ENCODE measurements at regions of chr14 and their contacts with region 1.

Region 1: DNA sequence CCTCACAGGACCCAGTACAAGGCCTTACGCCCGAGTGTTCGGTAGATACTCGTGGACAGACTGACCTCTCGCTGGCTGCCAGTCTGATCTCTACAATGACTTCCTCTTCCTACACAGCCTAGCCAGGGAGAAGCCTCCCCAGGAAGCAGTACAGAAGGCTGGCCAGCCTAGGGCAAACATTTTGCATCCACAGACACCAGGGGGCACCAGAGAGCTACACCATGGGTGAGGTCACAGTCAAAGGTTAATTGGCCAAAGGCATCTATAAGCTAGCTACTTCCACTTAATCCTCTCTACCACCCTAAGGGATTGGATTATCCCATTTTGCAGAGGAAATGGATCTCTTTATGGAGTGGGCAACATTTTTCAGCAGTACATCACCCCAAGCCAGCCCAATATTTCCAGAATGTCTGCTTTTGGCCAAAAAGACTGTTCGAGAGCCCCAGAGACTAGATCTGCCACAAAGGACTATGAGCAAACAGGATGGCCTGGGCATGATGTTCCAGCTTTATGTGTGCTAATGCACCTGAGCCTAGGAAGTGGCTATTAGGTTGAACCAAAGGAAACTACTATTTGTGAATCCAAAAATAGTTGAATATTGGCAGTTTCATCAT is 14.6 kb upstream of the PNMA1 start:
- DNase-seq: no peak
- ATAC-seq: peak; percentile 95
- H3K4me3 ChIP-seq: no peak overlapping the region
- H3K27ac ChIP-seq: no peak overlapping the region
- H3K4me1 ChIP-seq: no peaks in the 10 kb centered on the region
- H3K27me3 ChIP-seq: no peaks in the 10 kb centered on the region
- CTCF ChIP-seq: peak; percentile 90 to 95 (median 91)
- EP300 ChIP-seq: no peak
- POLR2A ChIP-seq: 0 out of 2 replicates have a peak, but pooled peaks have one; percentile 5
- RAD21 ChIP-seq: peak; percentile 95

Region 2: DNA sequence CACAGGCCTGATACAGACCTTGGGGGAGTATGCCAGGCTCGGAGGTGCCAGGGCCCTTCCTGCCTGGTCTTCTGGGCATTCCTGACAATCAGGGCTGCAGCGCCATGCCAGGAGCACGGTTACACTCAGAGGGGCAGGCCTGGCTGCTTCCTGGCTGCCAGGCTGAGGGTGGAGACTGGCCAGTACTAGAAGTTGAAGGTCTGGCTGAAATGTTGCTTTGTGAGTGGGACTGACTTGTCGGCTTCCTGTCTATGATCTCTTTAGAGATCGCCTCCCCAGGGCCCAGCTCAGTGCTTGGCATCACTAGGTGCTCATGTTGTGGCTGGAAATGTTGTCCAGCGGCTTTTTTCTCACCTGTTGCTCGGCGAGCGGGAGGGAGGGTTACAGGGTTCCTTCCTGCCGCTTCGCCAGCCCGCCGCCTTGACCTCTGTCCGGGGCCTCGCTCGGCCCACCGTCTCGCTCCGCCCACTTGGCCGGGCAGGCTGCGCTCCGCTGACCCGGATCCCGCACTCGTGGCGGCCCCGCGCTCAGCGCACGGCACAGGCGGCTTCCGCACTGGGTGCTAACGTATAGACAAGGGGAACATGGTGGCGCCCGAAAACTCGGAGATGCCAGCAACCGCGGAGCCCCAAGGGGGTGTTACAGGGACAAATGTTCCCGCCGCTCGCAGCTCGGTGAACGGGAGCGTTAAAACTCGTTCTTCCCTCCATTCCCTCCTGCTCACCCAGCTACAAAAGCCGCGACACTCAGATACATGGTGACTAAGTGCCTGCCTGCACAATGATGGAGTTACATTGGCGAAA is 458.9 kb before region 1 on chr14:
- CTCF ChIA-PET with region 1: no interaction called
- POLR2A ChIA-PET with region 1: no interaction called
- RAD21 ChIA-PET with region 1: no interaction called
- SMC1A ChIA-PET with region 1: no interaction called
- in situ Hi-C with region 1: no loop called
- intact Hi-C with region 1: no loop called
- DNase-seq: no peak
- ATAC-seq: peak; percentile 97
- H3K4me3 ChIP-seq: peak overlapping the region; percentile 46; the same call in 1 of the 2 replicates
- H3K27ac ChIP-seq: peak overlapping the region; percentile 3; the same call in 1 of the 2 replicates
- H3K4me1 ChIP-seq: peaks cover 14% of the 10 kb centered on the region
- H3K27me3 ChIP-seq: no peaks in the 10 kb centered on the region
- CTCF ChIP-seq: no peak
- EP300 ChIP-seq: 0 out of 4 replicates have a peak, but pooled peaks of 1 of the 2 experiments have one; percentile 21
- POLR2A ChIP-seq: no peak; the same call in 1 of the 2 replicates
- RAD21 ChIP-seq: no peak

Region 3: DNA sequence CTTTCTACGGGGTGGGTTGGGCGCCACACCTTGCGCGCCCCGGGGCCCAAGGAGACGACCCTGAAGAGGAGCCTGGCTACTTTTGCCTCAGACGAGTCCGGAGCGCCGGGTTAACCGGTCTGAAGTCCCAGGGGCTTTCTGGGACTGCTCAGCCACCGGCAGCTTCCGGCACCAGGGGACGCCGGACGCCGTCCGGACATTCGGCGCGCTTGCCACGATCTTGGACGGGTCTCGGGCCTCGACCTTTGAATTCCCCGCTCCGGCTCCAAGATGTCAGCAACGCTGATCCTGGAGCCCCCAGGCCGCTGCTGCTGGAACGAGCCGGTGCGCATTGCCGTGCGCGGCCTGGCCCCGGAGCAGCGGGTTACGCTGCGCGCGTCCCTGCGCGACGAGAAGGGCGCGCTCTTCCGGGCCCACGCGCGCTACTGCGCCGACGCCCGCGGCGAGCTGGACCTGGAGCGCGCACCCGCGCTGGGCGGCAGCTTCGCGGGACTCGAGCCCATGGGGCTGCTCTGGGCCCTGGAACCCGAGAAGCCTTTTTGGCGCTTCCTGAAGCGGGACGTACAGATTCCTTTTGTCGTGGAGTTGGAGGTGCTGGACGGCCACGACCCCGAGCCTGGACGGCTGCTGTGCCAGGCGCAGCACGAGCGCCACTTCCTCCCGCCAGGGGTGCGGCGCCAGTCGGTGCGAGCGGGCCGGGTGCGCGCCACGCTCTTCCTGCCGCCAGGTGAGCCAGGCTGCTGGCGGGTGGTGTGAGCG is 137.0 kb before region 1 on chr14 and contains the start of gene ACOT4:
- CTCF ChIA-PET with region 1: no interaction called
- POLR2A ChIA-PET with region 1: no interaction called
- RAD21 ChIA-PET with region 1: no interaction called
- SMC1A ChIA-PET with region 1: no interaction called
- in situ Hi-C with region 1: no loop called
- intact Hi-C with region 1: no loop called
- DNase-seq: no peak
- ATAC-seq: peak; percentile 90
- H3K4me3 ChIP-seq: peak within 1 kb of the TSS; percentile 63; the same call in 1 of the 2 replicates
- H3K27ac ChIP-seq: no peak within 1 kb of the TSS
- H3K4me1 ChIP-seq: no peaks in the 10 kb centered on the region
- H3K27me3 ChIP-seq: no peaks in the 10 kb centered on the region
- CTCF ChIP-seq: peak in 1 of 3 experiments; percentile 15; a peak in 3 of 6 replicates
- EP300 ChIP-seq: no peak
- POLR2A ChIP-seq: peak; percentile 67
- RAD21 ChIP-seq: no peak
- polyA plus RNA-seq, gene ACOT4: 0.68 to 0.86 TPM

Region 4: GRCh38 chr14:73713803-73714655 is 14.8 kb before region 1 on chr14 and contains the start of gene PNMA1:
- CTCF ChIA-PET with region 1: interaction called, 12 read pairs
- POLR2A ChIA-PET with region 1: no interaction called
- RAD21 ChIA-PET with region 1: interaction called, 3 read pairs
- SMC1A ChIA-PET with region 1: interaction called, 6 read pairs
- in situ Hi-C with region 1: no loop called
- intact Hi-C with region 1: no loop called
- DNase-seq: no peak
- ATAC-seq: peak; percentile 89
- H3K4me3 ChIP-seq: peak within 1 kb of the TSS; percentile 89
- H3K27ac ChIP-seq: peak within 1 kb of the TSS; percentile 63
- H3K4me1 ChIP-seq: peaks cover 4% of the 10 kb centered on the region
- H3K27me3 ChIP-seq: no peaks in the 10 kb centered on the region
- CTCF ChIP-seq: no peak
- EP300 ChIP-seq: no peak
- POLR2A ChIP-seq: peak; percentile 86
- RAD21 ChIP-seq: no peak
- polyA plus RNA-seq, gene PNMA1: 1.8 to 6.5 TPM

Region 5: DNA sequence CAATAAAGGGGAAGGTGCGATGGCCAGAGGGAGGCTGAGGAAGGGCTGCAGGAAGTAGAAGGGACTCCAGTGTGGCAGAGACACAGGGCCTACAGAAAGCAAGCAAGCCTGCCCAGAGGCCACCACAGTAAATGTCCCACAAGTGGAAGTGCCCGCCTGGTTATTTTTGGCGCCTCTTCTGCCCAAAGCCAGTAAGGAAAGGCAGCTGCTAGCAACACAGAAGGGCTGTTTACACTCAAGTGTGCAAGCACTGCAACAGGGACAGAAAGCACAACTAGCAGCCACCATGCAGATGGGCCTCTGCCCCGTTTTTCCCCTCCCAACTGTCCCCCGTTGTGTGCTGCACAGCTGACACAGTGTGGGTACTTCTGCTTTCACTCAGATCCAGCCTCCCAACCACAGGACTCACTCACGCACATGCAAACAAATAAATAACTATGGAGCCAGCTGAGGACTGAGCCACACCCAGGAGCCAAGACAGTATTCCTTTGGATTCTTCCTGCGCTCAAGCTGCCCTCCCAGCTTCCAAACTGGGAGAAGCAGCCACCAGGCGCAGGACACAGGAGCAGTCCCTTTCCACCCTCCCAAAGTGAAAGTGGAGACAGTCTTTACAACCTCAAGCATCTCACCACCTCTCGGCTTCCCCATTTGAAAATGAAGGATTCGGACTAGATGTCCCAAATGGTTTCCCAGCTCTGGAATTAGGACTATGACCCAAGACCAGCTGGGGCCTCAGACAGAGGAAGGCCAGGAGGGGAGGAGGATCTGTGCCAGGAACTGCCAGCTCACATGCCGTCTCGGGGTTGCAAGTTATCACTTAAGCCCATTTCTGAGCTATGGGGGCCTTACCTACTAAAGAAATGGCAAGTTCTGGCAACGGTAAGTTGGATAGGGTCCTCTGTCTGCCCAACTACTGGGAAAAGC is 25.4 kb after region 1 on chr14:
- CTCF ChIA-PET with region 1: interaction called, 34 read pairs
- POLR2A ChIA-PET with region 1: interaction called, 6 read pairs
- RAD21 ChIA-PET with region 1: interaction called, 19 read pairs
- SMC1A ChIA-PET with region 1: interaction called, 87 read pairs
- in situ Hi-C with region 1: no loop called
- intact Hi-C with region 1: loop called (anchors 1 kb)
- DNase-seq: peak; percentile 61
- ATAC-seq: peak; percentile 53
- H3K4me3 ChIP-seq: peak overlapping the region; percentile 83
- H3K27ac ChIP-seq: peak overlapping the region; percentile 94
- H3K4me1 ChIP-seq: peaks cover 68% of the 10 kb centered on the region
- H3K27me3 ChIP-seq: no peaks in the 10 kb centered on the region
- CTCF ChIP-seq: no peak
- EP300 ChIP-seq: peak; percentile 82 to 84
- POLR2A ChIP-seq: peak; percentile 68
- RAD21 ChIP-seq: no peak

Region 6: DNA sequence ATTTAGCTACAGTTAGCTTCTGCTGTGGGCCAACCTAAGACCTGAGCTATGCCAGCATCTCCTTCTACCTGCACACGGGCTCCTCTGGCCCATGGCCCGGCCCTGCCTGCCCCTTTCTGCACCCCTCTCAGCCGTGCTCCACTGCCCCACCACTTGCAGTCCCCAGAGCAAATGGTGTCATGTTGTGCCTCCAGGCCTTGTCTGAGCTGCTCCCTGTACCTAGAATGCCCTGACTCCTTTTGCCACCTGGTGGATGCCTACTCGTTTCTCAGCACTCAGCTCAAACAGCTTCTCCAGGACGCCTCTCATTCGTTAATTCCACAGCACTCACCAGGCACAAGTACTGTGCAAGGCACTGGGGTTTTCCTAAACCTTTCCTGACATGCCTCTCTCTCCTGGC is 48.6 kb after region 1 on chr14:
- CTCF ChIA-PET with region 1: interaction called, 10 read pairs
- POLR2A ChIA-PET with region 1: no interaction called
- RAD21 ChIA-PET with region 1: interaction called, 12 read pairs
- SMC1A ChIA-PET with region 1: interaction called, 5 read pairs
- in situ Hi-C with region 1: no loop called
- intact Hi-C with region 1: no loop called
- DNase-seq: no peak
- ATAC-seq: peak; percentile 68
- H3K4me3 ChIP-seq: no peak overlapping the region
- H3K27ac ChIP-seq: no peak overlapping the region
- H3K4me1 ChIP-seq: peaks cover 68% of the 10 kb centered on the region
- H3K27me3 ChIP-seq: no peaks in the 10 kb centered on the region
- CTCF ChIP-seq: peak in 1 of 3 experiments; percentile 32; a peak in 2 of 6 replicates
- EP300 ChIP-seq: no peak
- POLR2A ChIP-seq: no peak
- RAD21 ChIP-seq: no peak

Region 7: DNA sequence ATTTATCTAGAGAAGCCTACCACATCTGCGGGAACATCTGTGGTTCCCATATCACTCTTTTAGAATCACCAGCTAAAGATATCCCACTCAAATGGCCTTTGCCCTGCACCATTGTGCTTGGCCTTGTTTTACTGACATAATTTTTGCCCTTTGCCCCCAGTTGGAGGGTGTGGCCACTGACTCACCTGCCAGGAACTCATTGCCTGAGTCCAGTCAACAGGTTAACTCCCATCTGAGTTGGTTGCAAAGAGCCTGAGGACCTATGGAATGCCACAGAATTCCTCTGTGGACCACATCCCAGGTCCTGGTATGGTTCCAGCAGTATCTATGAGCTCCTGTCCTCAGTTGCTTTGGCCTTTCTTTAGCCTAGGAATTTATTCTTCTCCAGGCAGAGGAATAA is 67.1 kb after region 1 on chr14:
- CTCF ChIA-PET with region 1: interaction called, 15 read pairs
- POLR2A ChIA-PET with region 1: no interaction called
- RAD21 ChIA-PET with region 1: interaction called, 5 read pairs
- SMC1A ChIA-PET with region 1: interaction called, 3 read pairs
- in situ Hi-C with region 1: no loop called
- intact Hi-C with region 1: no loop called
- DNase-seq: no peak
- ATAC-seq: no peak
- H3K4me3 ChIP-seq: no peak overlapping the region
- H3K27ac ChIP-seq: no peak overlapping the region
- H3K4me1 ChIP-seq: peaks cover 15% of the 10 kb centered on the region
- H3K27me3 ChIP-seq: no peaks in the 10 kb centered on the region
- CTCF ChIP-seq: no peak
- EP300 ChIP-seq: no peak
- POLR2A ChIP-seq: no peak
- RAD21 ChIP-seq: no peak

Region 8: DNA sequence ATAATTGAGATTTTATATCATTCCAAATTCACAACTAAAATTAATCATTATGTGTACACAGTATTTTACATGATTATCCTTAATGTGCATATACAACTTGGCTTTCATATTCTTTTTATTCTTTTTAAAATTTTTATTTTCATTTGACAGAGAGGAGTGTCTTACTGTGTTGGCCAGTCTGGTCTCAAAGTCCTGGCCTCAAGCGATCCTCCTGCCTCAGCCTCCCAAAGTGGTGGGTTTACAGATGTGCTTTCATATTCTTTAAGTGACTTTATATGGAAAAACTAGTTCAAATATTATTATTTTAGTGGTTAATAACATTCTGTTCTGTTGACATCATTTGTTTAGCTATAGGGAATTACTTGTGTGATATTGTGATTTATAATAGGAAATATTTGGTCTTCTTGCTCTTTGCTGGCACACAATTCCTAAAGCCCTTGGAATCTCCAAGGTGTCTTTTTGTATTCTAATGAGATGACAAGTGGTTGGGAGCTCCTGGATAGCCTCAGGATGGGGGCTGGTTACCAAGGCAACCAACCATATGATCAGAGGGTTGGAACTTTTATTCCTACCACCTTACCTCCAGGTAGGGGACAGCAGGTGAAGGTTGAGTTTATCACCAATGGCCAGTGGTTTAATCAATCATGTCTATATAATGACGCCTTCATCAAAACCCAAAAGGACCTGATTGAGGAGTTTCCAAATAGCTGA is 141.9 kb after region 1 on chr14:
- CTCF ChIA-PET with region 1: interaction called, 7 read pairs
- POLR2A ChIA-PET with region 1: no interaction called
- RAD21 ChIA-PET with region 1: interaction called, 3 read pairs
- SMC1A ChIA-PET with region 1: interaction called, 4 read pairs
- in situ Hi-C with region 1: no loop called
- intact Hi-C with region 1: loop called (anchors 1 kb)
- DNase-seq: no peak
- ATAC-seq: no peak
- H3K4me3 ChIP-seq: no peak overlapping the region
- H3K27ac ChIP-seq: no peak overlapping the region
- H3K4me1 ChIP-seq: no peaks in the 10 kb centered on the region
- H3K27me3 ChIP-seq: no peaks in the 10 kb centered on the region
- CTCF ChIP-seq: no peak
- EP300 ChIP-seq: no peak
- POLR2A ChIP-seq: no peak
- RAD21 ChIP-seq: no peak

Region 9: GRCh38 chr14:74038015-74038859 is 309.4 kb after region 1 on chr14:
- CTCF ChIA-PET with region 1: interaction called, 5 read pairs
- POLR2A ChIA-PET with region 1: interaction called, 3 read pairs
- RAD21 ChIA-PET with region 1: interaction called, 3 read pairs
- SMC1A ChIA-PET with region 1: no interaction called
- in situ Hi-C with region 1: loop called (anchors 25 kb)
- intact Hi-C with region 1: loop called (anchors 5 kb)
- DNase-seq: no peak
- ATAC-seq: peak; percentile 86
- H3K4me3 ChIP-seq: no peak overlapping the region
- H3K27ac ChIP-seq: no peak overlapping the region
- H3K4me1 ChIP-seq: no peaks in the 10 kb centered on the region
- H3K27me3 ChIP-seq: no peaks in the 10 kb centered on the region
- CTCF ChIP-seq: peak; percentile 42 to 65 (median 59); a peak in 5 of 6 replicates
- EP300 ChIP-seq: no peak
- POLR2A ChIP-seq: no peak
- RAD21 ChIP-seq: peak; percentile 70